Caco-2 (cell line): ENCODE measurements at regions of chr7 and their contacts with region 1.

Region 1: GRCh38 chr7:13725591-13725990 is 263.9 kb downstream of the ETV1 start:
- DNase-seq: no peak
- H3K4me3 ChIP-seq: no peak overlapping the region
- H3K4me3 Mint-ChIP-seq: no peak overlapping the region
- H3K27ac Mint-ChIP-seq: no peak overlapping the region
- H3K4me1 ChIP-seq: no peaks in the 10 kb centered on the region
- H3K4me1 Mint-ChIP-seq: no peaks in the 10 kb centered on the region
- H3K27me3 ChIP-seq: no peaks in the 10 kb centered on the region
- H3K27me3 Mint-ChIP-seq: no peaks in the 10 kb centered on the region
- CTCF ChIP-seq: peak in 1 of 2 experiments; percentile 22

Region 2: DNA sequence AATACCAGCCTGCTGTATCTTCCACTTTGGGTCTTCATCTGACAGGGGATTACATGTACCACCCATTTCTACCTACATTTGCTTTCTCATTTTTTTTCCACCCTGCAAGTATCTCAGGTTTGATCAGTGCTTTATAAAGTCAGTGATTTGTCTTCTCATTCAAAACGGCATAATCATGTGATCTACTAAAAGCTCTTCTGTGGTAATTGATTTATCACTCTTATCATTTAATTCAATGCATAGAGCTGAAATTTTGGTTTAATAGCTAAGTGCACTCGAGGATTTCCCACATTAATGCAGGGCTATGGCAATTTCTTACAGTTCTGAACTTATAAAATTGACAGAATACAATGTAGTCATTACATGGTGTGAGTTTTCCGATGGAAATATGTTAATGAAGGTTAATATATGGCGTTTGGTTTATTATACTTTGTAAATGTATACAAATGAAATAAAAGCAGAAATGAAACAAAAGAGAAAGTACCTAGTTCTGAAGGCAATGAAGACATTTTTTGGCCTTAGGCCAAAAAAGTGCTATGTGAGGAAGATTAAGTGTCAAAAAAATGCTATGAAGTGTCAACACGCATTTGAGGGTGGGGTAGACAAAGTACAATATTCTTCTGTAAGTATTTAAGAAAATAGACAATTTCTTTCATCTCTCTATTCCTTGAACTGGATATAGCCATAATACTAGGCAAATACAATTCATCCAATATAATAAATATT is 193.4 kb before region 1 on chr7:
- CTCF ChIA-PET with region 1: no interaction called
- POLR2A ChIA-PET with region 1: no interaction called
- intact Hi-C with region 1: loop called (anchors 5 kb)
- DNase-seq: no peak
- H3K4me3 ChIP-seq: no peak overlapping the region
- H3K4me3 Mint-ChIP-seq: no peak overlapping the region
- H3K27ac Mint-ChIP-seq: no peak overlapping the region
- H3K4me1 ChIP-seq: no peaks in the 10 kb centered on the region
- H3K4me1 Mint-ChIP-seq: no peaks in the 10 kb centered on the region
- H3K27me3 ChIP-seq: no peaks in the 10 kb centered on the region
- H3K27me3 Mint-ChIP-seq: no peaks in the 10 kb centered on the region
- CTCF ChIP-seq: no peak

Region 3: DNA sequence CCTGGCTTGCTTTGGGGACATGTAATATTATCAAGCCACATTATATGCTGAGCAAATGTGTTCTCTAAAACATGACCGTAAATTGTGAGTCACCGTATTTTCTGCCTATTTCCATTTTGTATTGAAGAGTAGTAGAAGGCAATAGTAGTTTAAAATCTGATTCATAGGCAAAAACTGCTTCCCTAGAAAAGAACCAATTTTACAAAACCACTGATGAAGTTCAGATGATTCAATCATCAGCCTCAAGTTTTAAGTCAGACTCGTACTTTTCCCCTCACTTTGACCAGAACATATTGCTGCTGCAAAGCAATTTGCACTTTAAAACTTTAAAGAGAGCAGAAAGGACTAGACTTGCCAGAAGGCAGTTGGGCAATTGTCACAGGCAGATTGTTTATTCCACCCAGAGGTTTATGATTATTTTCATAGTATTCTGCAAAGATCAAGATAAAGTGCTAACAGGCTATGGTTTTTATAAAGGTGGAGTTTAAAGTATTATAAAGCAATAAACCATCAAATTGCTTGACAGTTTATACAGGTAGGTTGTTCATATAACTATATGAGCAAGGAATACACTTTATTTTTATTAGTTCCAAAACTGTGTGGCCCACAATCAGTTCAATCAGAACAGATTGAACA is 95.7 kb after region 1 on chr7:
- CTCF ChIA-PET with region 1: no interaction called
- POLR2A ChIA-PET with region 1: no interaction called
- intact Hi-C with region 1: no loop called
- DNase-seq: no peak
- H3K4me3 ChIP-seq: no peak overlapping the region
- H3K4me3 Mint-ChIP-seq: no peak overlapping the region
- H3K27ac Mint-ChIP-seq: no peak overlapping the region
- H3K4me1 ChIP-seq: no peaks in the 10 kb centered on the region
- H3K4me1 Mint-ChIP-seq: no peaks in the 10 kb centered on the region
- H3K27me3 ChIP-seq: no peaks in the 10 kb centered on the region
- H3K27me3 Mint-ChIP-seq: no peaks in the 10 kb centered on the region
- CTCF ChIP-seq: no peak